Naive thymus-derived CD4-positive, alpha-beta T cell (primary cell): ENCODE measurements at regions of chr12 and their contacts with region 1.

Region 1: GRCh38 chr12:9760699-9761418 is at the start of gene CD69:
- DNase-seq: peak; percentile 50 to 92 (median 85)
- ATAC-seq: peak; percentile 75
- H3K4me3 ChIP-seq: peak within 1 kb of the TSS; percentile 70
- H3K4me3 Mint-ChIP-seq: peak within 1 kb of the TSS; percentile 87 to 99 (median 97)
- H3K27ac ChIP-seq: peak within 1 kb of the TSS; percentile 98
- H3K27ac Mint-ChIP-seq: peak within 1 kb of the TSS; percentile 97 to 100 (median 100)
- H3K4me1 ChIP-seq: peaks cover 34 to 51% of the 10 kb centered on the region in 2 donors
- H3K4me1 Mint-ChIP-seq: peaks cover 31 to 65% (median 55%) of the 10 kb centered on the region in 7 donors
- H3K27me3 ChIP-seq: no peaks in the 10 kb centered on the region
- H3K27me3 Mint-ChIP-seq: no peaks in the 10 kb centered on the region
- total RNA-seq, gene CD69: 25.8 to 588 (median 125) TPM

Region 2: GRCh38 chr12:9673404-9674225 is 87.2 kb before region 1 on chr12:
- CTCF ChIA-PET with region 1: no interaction called
- POLR2A ChIA-PET with region 1: interaction called, 43 read pairs
- intact Hi-C with region 1: loop called in 1 of 2 experiments (anchors 1 kb)
- DNase-seq: peak in 7 of 9 donors; percentile 36 to 67 (median 45)
- ATAC-seq: peak; percentile 63
- H3K4me3 ChIP-seq: peak overlapping the region; percentile 80
- H3K4me3 Mint-ChIP-seq: peak overlapping the region; percentile 89 to 99 (median 92)
- H3K27ac ChIP-seq: peak overlapping the region; percentile 83
- H3K27ac Mint-ChIP-seq: peak overlapping the region; percentile 90 to 99 (median 95)
- H3K4me1 ChIP-seq: peaks cover 30 to 38% of the 10 kb centered on the region in 2 donors
- H3K4me1 Mint-ChIP-seq: peaks cover 42 to 80% (median 69%) of the 10 kb centered on the region in 7 donors
- H3K27me3 ChIP-seq: no peaks in the 10 kb centered on the region
- H3K27me3 Mint-ChIP-seq: peaks cover 0 to 8% (median 0%) of the 10 kb centered on the region in 5 donors

Region 3: GRCh38 chr12:9741726-9742125 is 19.1 kb before region 1 on chr12:
- CTCF ChIA-PET with region 1: interaction called, 12 read pairs
- POLR2A ChIA-PET with region 1: interaction called, 271 read pairs
- intact Hi-C with region 1: loop called in 1 of 2 experiments (anchors 1 kb)
- DNase-seq: peak in 8 of 9 donors; percentile 63 to 95 (median 90)
- ATAC-seq: peak; percentile 84
- H3K4me3 ChIP-seq: peak overlapping the region; percentile 15
- H3K4me3 Mint-ChIP-seq: peak overlapping the region; percentile 22 to 95 (median 83)
- H3K27ac ChIP-seq: peak overlapping the region; percentile 76
- H3K27ac Mint-ChIP-seq: peak overlapping the region; percentile 89 to 100 (median 98)
- H3K4me1 ChIP-seq: peaks cover 55 to 59% of the 10 kb centered on the region in 2 donors
- H3K4me1 Mint-ChIP-seq: peaks cover 51 to 81% (median 71%) of the 10 kb centered on the region in 7 donors
- H3K27me3 ChIP-seq: no peaks in the 10 kb centered on the region
- H3K27me3 Mint-ChIP-seq: peaks cover 0 to 6% (median 0%) of the 10 kb centered on the region in 5 donors

Region 4: GRCh38 chr12:9773216-9773877 is 12.5 kb after region 1 on chr12:
- CTCF ChIA-PET with region 1: interaction called, 4 read pairs
- POLR2A ChIA-PET with region 1: interaction called, 106 read pairs
- intact Hi-C with region 1: no loop called
- DNase-seq: peak in 4 of 9 donors; percentile 41 to 70 (median 63)
- ATAC-seq: peak; percentile 78
- H3K4me3 ChIP-seq: peak overlapping the region; percentile 29
- H3K4me3 Mint-ChIP-seq: peak overlapping the region; percentile 4 to 78 (median 70)
- H3K27ac ChIP-seq: no peak overlapping the region
- H3K27ac Mint-ChIP-seq: peak overlapping the region; percentile 36 to 87 (median 73)
- H3K4me1 ChIP-seq: peaks cover 40 to 46% of the 10 kb centered on the region in 2 donors
- H3K4me1 Mint-ChIP-seq: peaks cover 46 to 91% (median 81%) of the 10 kb centered on the region in 7 donors
- H3K27me3 ChIP-seq: no peaks in the 10 kb centered on the region
- H3K27me3 Mint-ChIP-seq: no peaks in the 10 kb centered on the region

Region 5: DNA sequence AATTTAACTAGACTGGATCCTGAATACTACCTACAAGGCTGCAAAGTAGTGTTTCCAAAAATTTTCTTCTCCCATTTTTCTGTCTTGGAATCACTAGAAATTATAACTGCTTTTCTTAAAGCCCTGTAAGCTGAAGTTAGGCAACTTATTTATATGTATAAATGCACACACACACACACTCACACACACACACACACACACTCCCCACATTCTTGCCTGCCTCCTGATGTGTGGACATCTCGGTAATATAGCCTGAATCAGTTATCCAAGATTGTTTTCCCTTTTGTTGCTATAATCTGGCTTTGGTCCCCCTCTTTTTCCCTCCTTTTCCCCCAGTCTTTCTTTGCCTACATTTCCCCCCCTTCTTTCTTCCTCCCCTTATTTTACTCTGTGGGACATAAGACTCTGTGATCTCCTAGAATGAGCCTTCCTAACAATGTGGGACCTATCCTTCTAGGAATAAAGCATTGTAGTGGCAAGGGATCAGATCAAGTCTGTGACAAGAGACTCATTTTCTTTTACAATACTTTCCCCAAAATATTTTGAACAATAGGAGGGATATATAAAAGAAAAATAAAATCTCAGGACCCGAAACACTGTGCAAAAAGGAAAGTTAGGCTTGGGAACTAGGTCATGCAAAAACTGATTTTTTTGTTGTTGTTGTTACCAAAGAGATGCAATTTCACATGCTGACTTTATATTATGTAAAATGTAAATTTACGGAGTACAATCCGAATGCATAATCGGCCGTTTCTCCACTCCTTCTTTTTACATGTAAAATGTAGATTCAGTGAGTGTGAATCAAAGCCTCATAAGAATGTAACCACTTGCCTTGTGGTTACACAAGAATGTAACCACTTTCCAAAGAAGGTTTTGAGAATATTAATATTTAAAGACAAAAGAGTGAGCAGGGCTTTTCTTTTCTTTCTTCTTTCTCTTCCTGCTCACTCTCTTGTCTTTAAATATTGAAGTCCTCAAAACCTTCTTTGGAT is 26.2 kb after region 1 on chr12:
- CTCF ChIA-PET with region 1: interaction called, 4 read pairs
- POLR2A ChIA-PET with region 1: interaction called, 86 read pairs
- intact Hi-C with region 1: no loop called
- DNase-seq: no peak
- ATAC-seq: no peak
- H3K4me3 ChIP-seq: no peak overlapping the region
- H3K4me3 Mint-ChIP-seq: no peak overlapping the region
- H3K27ac ChIP-seq: no peak overlapping the region
- H3K27ac Mint-ChIP-seq: peak overlapping the region in 1 of 9 donors; percentile 58
- H3K4me1 ChIP-seq: no peaks in the 10 kb centered on the region
- H3K4me1 Mint-ChIP-seq: peaks cover 11 to 35% (median 22%) of the 10 kb centered on the region in 7 donors
- H3K27me3 ChIP-seq: no peaks in the 10 kb centered on the region
- H3K27me3 Mint-ChIP-seq: no peaks in the 10 kb centered on the region

Region 6: GRCh38 chr12:10721651-10722501 is 961.0 kb after region 1 on chr12:
- CTCF ChIA-PET with region 1: no interaction called
- POLR2A ChIA-PET with region 1: no interaction called
- intact Hi-C with region 1: loop called in 1 of 2 experiments (anchors 2 kb)
- DNase-seq: peak; percentile 45 to 84 (median 74)
- ATAC-seq: peak; percentile 83
- H3K4me3 ChIP-seq: peak overlapping the region; percentile 83
- H3K4me3 Mint-ChIP-seq: peak overlapping the region; percentile 80 to 96 (median 93)
- H3K27ac ChIP-seq: peak overlapping the region; percentile 61
- H3K27ac Mint-ChIP-seq: peak overlapping the region; percentile 48 to 96 (median 87)
- H3K4me1 ChIP-seq: peaks cover 9 to 19% of the 10 kb centered on the region in 2 donors
- H3K4me1 Mint-ChIP-seq: peaks cover 14 to 43% (median 21%) of the 10 kb centered on the region in 7 donors
- H3K27me3 ChIP-seq: peaks cover 0 to 4% of the 10 kb centered on the region in 2 donors
- H3K27me3 Mint-ChIP-seq: peaks cover 20 to 60% (median 44%) of the 10 kb centered on the region in 5 donors